Dendritic cell treated with granulocyte-macrophage colony-stimulating factor and Interleukin-4, amounts not matched to agents 40 ng/mL and 50 ng/mL, for 4 days (primary cell): ENCODE measurements at regions of chr2 and their contacts with region 1.

Region 1: GRCh38 chr2:11224887-11225286 is 69.6 kb downstream of the SLC66A3 start:
- H3K4me3 Mint-ChIP-seq: no peak overlapping the region
- H3K27ac Mint-ChIP-seq: no peak overlapping the region
- H3K4me1 Mint-ChIP-seq: peaks cover 9% of the 10 kb centered on the region
- H3K27me3 Mint-ChIP-seq: no peaks in the 10 kb centered on the region

Region 2: GRCh38 chr2:11160731-11161455 is 64.0 kb before region 1 on chr2:
- intact Hi-C with region 1: no loop called
- H3K4me3 Mint-ChIP-seq: peak overlapping the region; percentile 57
- H3K27ac Mint-ChIP-seq: peak overlapping the region; percentile 85
- H3K4me1 Mint-ChIP-seq: peaks cover 50% of the 10 kb centered on the region
- H3K27me3 Mint-ChIP-seq: no peaks in the 10 kb centered on the region

Region 3: GRCh38 chr2:11387854-11388692 is 163.2 kb after region 1 on chr2:
- intact Hi-C with region 1: no loop called
- H3K4me3 Mint-ChIP-seq: no peak overlapping the region
- H3K27ac Mint-ChIP-seq: no peak overlapping the region
- H3K4me1 Mint-ChIP-seq: peaks cover 12% of the 10 kb centered on the region
- H3K27me3 Mint-ChIP-seq: no peaks in the 10 kb centered on the region

Region 4: DNA sequence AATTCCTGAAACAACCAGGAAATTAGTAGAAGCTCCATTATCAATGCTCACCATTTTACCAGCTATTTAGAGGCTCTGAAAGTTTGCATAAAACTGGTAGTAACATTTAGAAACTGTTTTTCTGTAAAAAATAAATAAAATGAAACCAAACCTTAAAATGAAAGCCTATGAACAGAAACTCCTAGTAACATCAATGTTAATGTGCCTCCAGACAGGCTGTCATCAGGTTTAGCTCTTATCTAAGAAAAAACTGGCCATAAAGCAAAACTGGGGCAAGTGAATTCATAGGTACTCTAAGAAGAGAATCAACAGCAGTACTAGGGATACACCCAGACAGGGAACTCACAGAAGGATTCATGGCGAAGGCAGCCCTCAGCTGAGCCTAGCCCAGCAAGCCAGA is 233.0 kb after region 1 on chr2:
- intact Hi-C with region 1: loop called (anchors 10 kb)
- H3K4me3 Mint-ChIP-seq: no peak overlapping the region
- H3K27ac Mint-ChIP-seq: no peak overlapping the region
- H3K4me1 Mint-ChIP-seq: peaks cover 39% of the 10 kb centered on the region
- H3K27me3 Mint-ChIP-seq: no peaks in the 10 kb centered on the region